Lower leg skin (tissue), 4 donors: ENCODE measurements at regions of chr20 and their contacts with region 1.

Region 1: GRCh38 chr20:61886721-61887594 is 178.7 kb downstream of the TAF4 start:
- DNase-seq: no peak
- H3K4me3 ChIP-seq: no peak overlapping the region
- CTCF ChIP-seq: no peak
- POLR2A ChIP-seq: no peak

Region 2: GRCh38 chr20:60206259-60206658 is 1680.7 kb before region 1 on chr20:
- intact Hi-C with region 1: loop called (anchors 10 kb)
- DNase-seq: no peak
- H3K4me3 ChIP-seq: no peak overlapping the region
- CTCF ChIP-seq: no peak
- POLR2A ChIP-seq: no peak

Region 3: DNA sequence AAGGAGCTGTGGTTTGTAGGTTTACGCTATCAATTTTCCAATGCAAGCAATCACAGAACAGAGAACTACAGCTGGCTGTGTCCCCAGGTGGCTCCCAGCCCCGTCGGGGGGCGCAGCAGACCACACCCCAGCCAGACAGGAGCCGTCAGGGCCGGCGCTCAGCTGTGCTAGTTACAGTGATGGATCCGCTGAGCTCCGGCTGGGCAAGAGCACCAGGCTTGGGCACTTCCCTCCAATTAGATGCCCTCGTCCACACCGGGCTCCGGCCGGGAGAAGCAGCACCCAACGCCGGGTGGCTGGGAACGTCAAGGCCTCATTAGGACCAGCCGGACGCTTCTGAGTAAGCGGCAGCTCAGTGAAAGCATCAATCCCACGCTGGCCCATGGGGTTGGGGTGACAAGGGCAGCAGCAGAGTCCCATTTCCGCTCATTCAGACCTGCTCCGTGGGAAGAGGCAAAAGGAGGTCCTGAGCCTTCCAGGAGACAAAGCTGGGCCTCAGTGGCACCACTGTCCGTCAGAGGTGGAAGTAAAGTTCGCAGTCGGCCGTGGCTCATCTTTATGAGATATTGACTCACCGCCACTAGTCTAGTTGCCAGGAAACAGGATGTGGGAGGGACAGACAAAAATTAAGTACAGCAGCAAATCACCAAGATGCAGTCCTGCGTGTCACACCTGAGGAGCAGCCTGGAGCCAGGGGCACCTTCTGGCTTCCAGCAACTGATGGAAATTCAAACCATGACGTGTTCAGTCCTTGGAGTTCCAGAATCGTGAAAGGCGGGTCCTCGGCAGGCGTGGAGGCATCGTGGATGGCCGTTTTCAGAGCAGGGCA is 14.6 kb after region 1 on chr20:
- intact Hi-C with region 1: no loop called
- DNase-seq: no peak
- H3K4me3 ChIP-seq: no peak overlapping the region
- CTCF ChIP-seq: no peak
- POLR2A ChIP-seq: no peak